ENCODE measurements at regions of chr9 and their contacts with region 1.

Region 1: DNA sequence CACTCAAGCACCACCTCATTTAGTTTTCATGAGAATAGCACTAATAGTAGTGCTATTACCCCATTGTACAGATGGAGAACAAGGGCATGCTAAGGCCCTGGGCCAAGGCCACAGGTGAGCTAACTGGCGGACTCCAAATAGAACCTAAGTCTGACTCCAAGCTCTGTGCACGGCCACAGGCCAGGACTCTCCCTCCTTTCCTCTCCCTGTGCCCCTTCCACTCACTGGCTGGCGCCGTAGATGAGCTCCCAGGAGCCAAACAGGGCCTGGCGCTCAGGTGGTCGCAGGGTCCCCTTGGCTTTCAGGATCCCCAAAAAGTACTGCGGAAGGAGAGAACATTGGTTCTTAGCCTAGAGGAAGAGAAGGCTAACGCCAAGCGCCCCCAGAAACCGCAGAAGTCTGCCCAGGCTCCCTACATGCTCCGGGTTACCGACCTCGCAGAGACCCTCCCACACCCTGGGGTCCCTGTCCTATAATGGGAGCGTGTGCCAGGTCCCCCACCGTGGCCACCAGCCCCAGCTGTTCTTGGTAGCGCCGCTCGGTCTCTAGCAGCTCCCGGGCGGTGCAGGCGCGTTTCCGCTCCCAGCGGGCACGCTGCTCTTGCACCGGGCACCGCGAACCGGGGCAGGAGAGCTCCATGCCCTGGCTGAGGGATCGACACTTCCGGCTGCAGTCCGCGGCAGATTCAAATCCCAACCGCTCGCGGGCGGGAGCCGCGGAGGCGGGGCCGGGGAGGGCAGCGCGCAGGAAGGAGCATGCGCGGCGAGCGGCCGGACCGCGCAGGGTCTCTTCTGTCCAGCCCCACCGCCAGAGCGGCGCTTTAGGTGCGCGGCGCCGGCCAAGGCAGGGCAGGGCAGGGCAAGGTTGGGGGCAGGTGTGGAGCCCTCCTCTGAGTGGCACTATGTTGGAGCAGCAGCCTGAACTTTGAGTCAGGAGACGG is at the start of gene ARHGEF39:
- DNase-seq: peak; percentile 89
- ATAC-seq: peak; percentile 89
- total RNA-seq, gene ARHGEF39: 0.24 TPM

Region 2: DNA sequence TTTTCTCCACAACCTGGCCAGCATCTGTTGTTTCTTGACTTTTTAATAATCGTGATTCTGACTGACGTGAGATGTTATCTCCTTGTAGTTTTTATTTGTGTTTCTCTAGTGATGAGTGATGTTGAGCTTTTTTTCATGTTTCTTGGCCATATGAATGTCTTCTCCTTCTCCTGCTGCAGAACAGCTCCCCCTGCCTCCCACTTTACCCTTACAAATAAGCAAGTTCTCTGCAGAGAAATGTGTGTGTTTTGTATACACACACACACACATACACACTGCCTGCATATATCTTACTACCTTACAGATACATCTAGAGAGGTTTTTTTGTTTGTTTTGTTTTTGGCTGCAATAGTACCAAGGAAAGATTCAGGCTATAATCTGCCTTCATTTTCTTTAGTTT is 795.4 kb before region 1 on chr9:
- intact Hi-C with region 1: no loop called
- DNase-seq: no peak
- ATAC-seq: no peak

Region 3: GRCh38 chr9:35696525-35697215 is 31.9 kb after region 1 on chr9:
- intact Hi-C with region 1: loop called (anchors 5 kb)
- DNase-seq: peak; percentile 71
- ATAC-seq: peak; percentile 72

Region 4: GRCh38 chr9:35729700-35730485 is 65.1 kb after region 1 on chr9:
- intact Hi-C with region 1: loop called (anchors 5 kb)
- DNase-seq: peak; percentile 80
- ATAC-seq: no peak

Measured in Right ventricle myocardium superior (tissue), 1 donor.